Left cardiac atrium (tissue), 4 donors: ENCODE measurements at regions of chr3 and their contacts with region 1.

Region 1: DNA sequence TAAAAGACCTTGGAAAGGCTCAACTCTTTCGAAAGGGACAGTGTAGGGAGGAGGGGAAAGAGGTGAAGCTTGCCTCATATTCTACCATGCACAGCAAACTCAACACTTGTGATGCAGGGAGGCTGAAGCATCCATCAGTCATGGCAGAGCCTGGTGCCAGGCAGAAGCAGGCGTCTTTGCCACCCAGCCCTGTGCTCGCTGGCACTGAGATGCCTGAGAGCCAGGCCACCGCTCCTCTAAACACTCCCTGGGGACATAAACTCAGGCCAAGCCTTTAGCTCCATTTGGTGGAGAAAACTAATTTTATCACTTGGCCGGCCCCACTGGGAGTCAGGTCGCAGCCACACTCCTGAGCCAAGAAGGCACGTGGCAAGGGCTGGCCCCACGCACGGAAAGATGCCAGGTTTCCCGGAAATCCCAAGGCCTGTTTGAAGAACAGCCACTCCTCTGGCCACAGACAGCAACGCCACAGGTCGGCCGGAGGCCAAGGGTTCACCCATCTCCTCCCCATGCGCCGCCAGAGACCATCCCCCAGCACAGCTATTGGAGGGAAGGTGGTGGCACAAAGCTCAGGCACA is 30.7 kb downstream of the XXYLT1 start:
- DNase-seq: peak; percentile 79
- ATAC-seq: peak; percentile 65 to 84

Region 2: GRCh38 chr3:195133462-195133861 is 106.8 kb before region 1 on chr3:
- intact Hi-C with region 1: loop called in 1 of 2 experiments (anchors 10 kb)
- DNase-seq: peak; percentile 55
- ATAC-seq: peak; percentile 36 to 52

Region 3: DNA sequence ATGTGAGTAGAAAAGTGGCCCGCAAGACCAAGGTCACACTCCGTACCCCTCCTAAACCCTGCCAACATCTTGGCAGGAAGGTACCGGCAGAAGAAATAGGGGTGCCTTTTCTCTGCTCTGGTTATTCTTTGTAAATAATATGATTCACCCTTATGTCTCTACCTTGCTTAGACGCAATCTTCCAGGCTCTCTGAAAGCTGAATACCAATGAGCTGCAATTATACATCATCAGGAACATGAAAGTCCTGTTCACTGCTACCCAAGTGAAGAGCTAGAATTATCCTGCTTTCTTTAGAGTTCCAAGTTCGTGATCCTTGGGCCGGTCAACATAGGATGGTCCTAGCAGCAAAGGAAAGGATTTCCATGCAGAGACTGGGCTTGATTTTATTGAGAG is 95.4 kb before region 1 on chr3:
- intact Hi-C with region 1: no loop called
- DNase-seq: no peak
- ATAC-seq: no peak

Region 4: GRCh38 chr3:195154793-195155535 is 85.3 kb before region 1 on chr3:
- intact Hi-C with region 1: loop called in 1 of 2 experiments (anchors 5 kb)
- DNase-seq: peak; percentile 89
- ATAC-seq: peak; percentile 52 to 58

Region 5: DNA sequence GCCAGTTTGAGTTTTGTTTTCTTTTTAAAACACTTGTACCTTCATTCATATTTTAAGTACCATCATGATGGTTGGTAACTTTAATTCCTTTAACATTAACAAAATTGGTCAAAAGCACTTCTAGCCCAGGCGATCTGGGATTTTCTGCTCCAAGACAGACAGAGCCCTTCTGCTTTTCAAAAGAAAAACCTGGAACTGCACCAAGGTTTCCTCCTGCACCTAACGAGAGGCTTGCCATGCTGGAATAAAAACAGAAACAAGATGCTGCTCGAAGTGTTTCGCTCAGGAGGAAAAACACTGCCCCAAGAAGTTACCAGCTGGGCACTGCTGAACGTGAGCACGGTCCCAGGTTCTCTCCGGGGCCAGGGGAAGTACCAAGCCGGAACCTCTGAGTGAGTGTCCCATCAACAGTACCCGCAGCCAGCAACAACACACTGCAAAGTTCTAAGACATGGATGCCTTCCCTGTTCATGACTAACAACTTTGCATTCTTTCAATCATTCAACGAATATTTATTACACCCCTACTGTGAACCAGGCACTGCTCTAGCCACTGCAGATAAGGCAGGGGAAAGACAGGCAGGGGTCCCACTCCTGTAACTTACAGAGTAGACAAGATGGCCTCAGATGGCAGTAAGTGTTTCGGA is 68.1 kb before region 1 on chr3:
- intact Hi-C with region 1: loop called in 1 of 2 experiments (anchors 5 kb)
- DNase-seq: no peak
- ATAC-seq: peak; percentile 9 to 44

Region 6: GRCh38 chr3:195195321-195196209 is 44.7 kb before region 1 on chr3:
- intact Hi-C with region 1: no loop called
- DNase-seq: no peak
- ATAC-seq: peak in 1 of 2 donors; percentile 22